Heart right ventricle (tissue), 16 donors: ENCODE measurements at regions of chr5 and their contacts with region 1.

Region 1: GRCh38 chr5:149367249-149367971 is 9.6 kb downstream of the PCYOX1L start:
- DNase-seq: peak; percentile 37 to 75
- ATAC-seq: peak; percentile 43 to 66 (median 57)
- H3K4me3 ChIP-seq: no peak overlapping the region
- H3K27ac ChIP-seq: no peak overlapping the region
- H3K4me1 ChIP-seq: peaks cover 0 to 35% (median 12%) of the 10 kb centered on the region in 9 donors
- H3K27me3 ChIP-seq: no peaks in the 10 kb centered on the region
- CTCF ChIP-seq: peak; percentile 61 to 86 (median 82)

Region 2: GRCh38 chr5:148984333-148984732 is 383.1 kb before region 1 on chr5:
- intact Hi-C with region 1: no loop called
- DNase-seq: no peak
- ATAC-seq: no peak
- H3K4me3 ChIP-seq: no peak overlapping the region
- H3K27ac ChIP-seq: no peak overlapping the region
- H3K4me1 ChIP-seq: peaks cover 0 to 13% (median 5%) of the 10 kb centered on the region in 9 donors
- H3K27me3 ChIP-seq: no peaks in the 10 kb centered on the region
- CTCF ChIP-seq: no peak

Region 3: GRCh38 chr5:149205625-149206523 is 161.5 kb before region 1 on chr5:
- intact Hi-C with region 1: no loop called
- DNase-seq: peak; percentile 33 to 50
- ATAC-seq: peak; percentile 20 to 77 (median 49)
- H3K4me3 ChIP-seq: no peak overlapping the region
- H3K27ac ChIP-seq: peak overlapping the region in 7 of 10 donors; percentile 33 to 74 (median 55)
- H3K4me1 ChIP-seq: peaks cover 18 to 59% (median 48%) of the 10 kb centered on the region in 9 donors
- H3K27me3 ChIP-seq: no peaks in the 10 kb centered on the region
- CTCF ChIP-seq: no peak

Region 4: DNA sequence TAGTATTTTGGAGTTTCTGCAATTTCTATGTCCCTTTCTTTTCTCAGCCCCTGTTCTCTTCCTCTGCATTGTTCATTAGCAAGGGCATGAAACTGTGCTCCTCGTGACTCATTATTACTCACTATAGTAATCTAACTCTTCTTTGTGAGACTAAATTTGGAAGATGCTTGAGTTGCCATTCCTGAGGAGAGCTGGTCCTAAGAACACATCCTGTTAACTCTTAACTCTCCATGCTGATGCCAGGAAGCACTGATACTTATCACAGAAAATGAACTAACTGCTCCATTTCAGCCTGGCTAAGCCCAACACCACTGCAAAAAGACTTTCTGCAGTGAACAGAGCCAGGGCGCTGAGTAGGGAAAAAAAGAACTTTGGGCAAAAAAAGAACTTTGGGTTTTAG is 194.4 kb after region 1 on chr5:
- intact Hi-C with region 1: loop called in 4 of 10 experiments (anchors 5 kb)
- DNase-seq: peak in 1 of 2 donors; percentile 34
- ATAC-seq: peak; percentile 60 to 95 (median 90)
- H3K4me3 ChIP-seq: peak overlapping the region in 5 of 10 donors; percentile 5 to 24 (median 20)
- H3K27ac ChIP-seq: peak overlapping the region; percentile 5 to 94 (median 84)
- H3K4me1 ChIP-seq: peaks cover 6 to 47% (median 39%) of the 10 kb centered on the region in 9 donors
- H3K27me3 ChIP-seq: no peaks in the 10 kb centered on the region
- CTCF ChIP-seq: no peak

Region 5: GRCh38 chr5:149567226-149567625 is 199.8 kb after region 1 on chr5:
- intact Hi-C with region 1: loop called in 3 of 10 experiments (anchors 5 kb)
- DNase-seq: no peak
- ATAC-seq: no peak
- H3K4me3 ChIP-seq: no peak overlapping the region
- H3K27ac ChIP-seq: no peak overlapping the region
- H3K4me1 ChIP-seq: peaks cover 0 to 27% (median 22%) of the 10 kb centered on the region in 9 donors
- H3K27me3 ChIP-seq: no peaks in the 10 kb centered on the region
- CTCF ChIP-seq: no peak